ENCODE measurements at regions of chr19 and their contacts with region 1.

Region 1: GRCh38 chr19:18269070-18269723 is 5.1 kb downstream of the IQCN start:
- DNase-seq: no peak
- ATAC-seq: no peak
- H3K4me3 ChIP-seq: no peak overlapping the region
- H3K27ac ChIP-seq: no peak overlapping the region
- H3K4me1 ChIP-seq: peaks cover under 1% of the 10 kb centered on the region; the same call in 1 of the 2 replicates
- H3K27me3 ChIP-seq: no peaks in the 10 kb centered on the region
- CTCF ChIP-seq: no peak

Region 2: GRCh38 chr19:18251587-18252369 is 17.4 kb before region 1 on chr19:
- CTCF ChIA-PET with region 1: interaction called, 15 read pairs
- POLR2A ChIA-PET with region 1: no interaction called
- intact Hi-C with region 1: no loop called
- DNase-seq: peak; percentile 87
- ATAC-seq: peak; percentile 77
- H3K4me3 ChIP-seq: no peak overlapping the region
- H3K27ac ChIP-seq: no peak overlapping the region
- H3K4me1 ChIP-seq: peaks cover 12% of the 10 kb centered on the region
- H3K27me3 ChIP-seq: no peaks in the 10 kb centered on the region
- CTCF ChIP-seq: peak; percentile 94